Panc1 (cell line): ENCODE measurements at regions of chr2 and their contacts with region 1.

Region 1: GRCh38 chr2:101776172-101777043 is 78.9 kb downstream of the MAP4K4 start:
- DNase-seq: no peak
- ATAC-seq: no peak
- H3K4me3 ChIP-seq: no peak overlapping the region
- H3K27ac ChIP-seq: no peak overlapping the region
- H3K4me1 ChIP-seq: peaks cover 3% of the 10 kb centered on the region; the same call in 1 of the 2 replicates
- H3K27me3 ChIP-seq: no peaks in the 10 kb centered on the region
- CTCF ChIP-seq: peak; percentile 30; the same call in 1 of the 2 replicates

Region 2: GRCh38 chr2:101759162-101759561 is 17.2 kb before region 1 on chr2:
- CTCF ChIA-PET with region 1: no interaction called
- POLR2A ChIA-PET with region 1: interaction called, 15 read pairs
- in situ Hi-C with region 1: no loop called
- intact Hi-C with region 1: no loop called
- DNase-seq: no peak
- ATAC-seq: peak; percentile 63
- H3K4me3 ChIP-seq: peak overlapping the region; percentile 7 to 38; a peak in 3 of 4 replicates
- H3K27ac ChIP-seq: peak overlapping the region; percentile 64
- H3K4me1 ChIP-seq: peaks cover 52% of the 10 kb centered on the region
- H3K27me3 ChIP-seq: no peaks in the 10 kb centered on the region
- CTCF ChIP-seq: no peak